ENCODE measurements at regions of chr2 and their contacts with region 1.

Region 1: DNA sequence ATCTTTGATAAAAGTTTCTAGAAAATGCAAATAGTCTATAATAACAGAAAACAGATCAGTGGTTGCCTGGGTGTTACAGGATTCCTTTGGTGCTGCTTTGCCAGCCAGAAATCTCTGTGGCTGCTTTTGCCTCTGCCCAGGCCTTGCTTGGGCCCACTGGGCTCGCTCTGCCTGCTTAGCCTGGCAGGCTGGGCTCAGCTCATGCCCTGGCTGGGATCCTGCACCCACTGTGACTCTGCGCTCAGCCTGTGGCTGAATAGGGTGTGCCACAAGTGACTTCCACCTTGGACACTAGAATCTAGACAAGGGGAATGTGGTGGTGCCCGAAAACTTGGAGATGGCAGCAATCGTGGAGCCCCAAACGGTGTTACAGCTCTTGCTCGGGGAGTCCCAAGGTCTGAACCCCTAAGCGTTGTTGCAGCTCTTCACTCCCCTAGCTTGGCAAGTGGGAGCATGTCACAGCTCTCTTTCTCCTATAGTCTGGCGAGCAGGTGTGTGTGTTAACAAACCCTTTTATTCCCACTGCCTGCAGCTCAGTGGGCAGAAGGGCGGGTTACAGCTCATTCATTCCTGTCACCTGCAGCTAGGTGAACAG is 50.9 kb downstream of the FBXO48 start:
- DNase-seq: no peak
- H3K4me3 Mint-ChIP-seq: no peak overlapping the region
- H3K27ac Mint-ChIP-seq: no peak overlapping the region
- H3K4me1 Mint-ChIP-seq: peaks cover 6% of the 10 kb centered on the region
- H3K27me3 Mint-ChIP-seq: peaks cover 7% of the 10 kb centered on the region

Region 2: GRCh38 chr2:68403199-68403644 is 13.0 kb before region 1 on chr2:
- CTCF ChIA-PET with region 1: interaction called, 3 read pairs
- POLR2A ChIA-PET with region 1: interaction called, 10 read pairs
- DNase-seq: no peak
- H3K4me3 Mint-ChIP-seq: no peak overlapping the region
- H3K27ac Mint-ChIP-seq: no peak overlapping the region
- H3K4me1 Mint-ChIP-seq: no peaks in the 10 kb centered on the region
- H3K27me3 Mint-ChIP-seq: peaks cover 50% of the 10 kb centered on the region

Measured in activated CD4-positive, alpha-beta T cell treated with anti-CD3 and anti-CD28 coated beads, Interleukin-2, amount 10 ng/mL, durations not matched to agents 7 days and 5 days (primary cell).